ENCODE measurements at regions of chr2 and their contacts with region 1.

Region 1: DNA sequence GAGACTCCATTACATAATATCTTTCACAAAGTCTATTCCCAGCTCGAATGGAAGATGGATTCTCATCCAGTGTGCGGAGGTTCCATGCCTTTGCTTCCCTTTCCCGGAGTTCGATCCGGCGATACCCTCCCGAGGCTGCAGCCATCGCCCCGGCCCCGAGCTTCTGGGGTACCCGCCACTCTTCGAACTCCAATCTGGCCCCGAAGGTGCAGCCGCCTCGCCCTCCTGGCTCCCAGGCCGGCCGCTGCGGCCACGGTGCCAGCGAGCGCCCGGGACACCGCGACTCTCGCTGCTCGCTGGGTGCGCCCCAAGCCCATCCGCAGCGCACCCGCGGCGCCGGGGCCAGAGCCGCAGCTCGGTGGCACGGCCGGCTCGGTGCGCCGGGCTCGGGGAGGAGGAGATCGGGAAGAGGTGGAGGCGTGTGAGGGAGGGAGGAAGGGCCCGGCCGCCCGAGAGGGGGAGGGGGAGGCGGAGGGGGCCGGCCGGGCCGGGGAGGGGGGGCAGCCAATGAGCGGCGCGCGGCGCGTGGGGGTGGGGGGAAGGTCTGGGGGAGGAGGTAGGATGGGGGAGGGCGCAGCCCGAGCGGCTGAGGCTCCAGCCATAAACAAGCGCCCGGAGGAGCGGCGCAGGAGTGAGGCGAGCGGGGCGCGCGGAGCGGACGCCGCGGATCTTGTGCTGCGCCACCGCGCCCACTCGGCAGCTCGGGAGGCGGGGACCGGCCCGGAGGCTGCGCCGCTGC is at the start of gene CRIM1:
- DNase-seq: peak; percentile 90 to 95 (median 91)
- H3K4me3 ChIP-seq: peak within 1 kb of the TSS; percentile 68
- H3K27ac ChIP-seq: peak within 1 kb of the TSS; percentile 85 to 91
- H3K4me1 ChIP-seq: peaks cover 5% of the 10 kb centered on the region
- H3K27me3 ChIP-seq: no peaks in the 10 kb centered on the region
- CTCF ChIP-seq: no peak
- EP300 ChIP-seq: no peak
- POLR2A ChIP-seq: peak; percentile 80
- total RNA-seq, gene CRIM1: 58.6 to 134 (median 68.1) TPM

Region 2: DNA sequence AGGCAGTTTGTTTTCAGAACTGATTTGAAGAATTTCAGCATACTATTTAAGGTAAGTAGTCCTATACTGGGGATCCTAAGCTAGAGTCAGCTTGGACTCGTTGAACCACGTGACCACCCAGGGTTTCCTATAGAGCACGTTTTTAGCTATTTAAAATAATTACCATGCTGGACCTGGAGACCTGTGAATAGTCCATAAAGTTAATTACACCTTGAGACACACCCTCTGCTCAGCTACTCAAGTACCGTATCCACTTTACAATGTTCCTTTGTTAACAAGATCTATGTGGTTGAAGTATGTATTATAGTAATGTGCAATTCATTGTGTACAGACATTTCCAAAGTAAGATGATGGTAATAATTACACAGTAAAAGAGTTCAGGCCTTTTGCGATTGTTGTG is 67.9 kb after region 1 on chr2:
- intact Hi-C with region 1: loop called in 1 of 4 experiments (anchors 5 kb)
- DNase-seq: no peak
- H3K4me3 ChIP-seq: no peak overlapping the region
- H3K27ac ChIP-seq: no peak overlapping the region
- H3K4me1 ChIP-seq: peaks cover 7% of the 10 kb centered on the region
- H3K27me3 ChIP-seq: no peaks in the 10 kb centered on the region
- CTCF ChIP-seq: no peak
- EP300 ChIP-seq: no peak
- POLR2A ChIP-seq: no peak

Region 3: DNA sequence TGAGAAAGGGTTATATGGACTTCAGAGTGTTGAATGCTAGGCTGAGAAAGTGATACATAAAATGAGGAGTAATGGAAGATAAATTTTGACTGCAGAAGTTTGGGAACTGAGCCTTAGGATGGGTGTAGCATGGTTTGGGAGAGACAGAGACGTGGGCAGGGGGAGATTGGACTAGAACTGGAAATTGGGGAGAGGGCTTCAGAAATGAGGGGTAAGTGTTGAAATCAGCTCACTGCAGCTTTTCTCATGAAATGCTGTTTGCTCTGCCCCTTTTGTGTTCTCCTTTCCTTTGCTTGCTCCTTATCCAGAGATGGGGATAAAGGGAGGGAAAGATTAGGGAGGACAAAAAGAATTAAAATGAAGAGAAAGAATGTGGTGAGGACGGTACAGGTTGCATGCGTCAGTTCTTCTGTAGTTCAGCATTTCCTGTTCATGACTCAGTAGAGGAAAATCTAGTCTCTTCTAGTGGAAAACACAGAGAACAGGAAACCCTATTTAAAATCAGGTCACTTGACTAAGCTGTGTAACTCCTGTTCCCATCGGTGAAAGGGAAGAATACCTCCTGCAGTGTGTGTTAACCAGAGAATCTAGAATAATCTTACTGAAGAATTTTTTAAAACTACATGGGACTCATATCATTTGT is 105.8 kb after region 1 on chr2:
- intact Hi-C with region 1: loop called in 2 of 4 experiments (anchors 5 to 10 kb)
- DNase-seq: no peak
- H3K4me3 ChIP-seq: no peak overlapping the region
- H3K27ac ChIP-seq: no peak overlapping the region
- H3K4me1 ChIP-seq: peaks cover 12% of the 10 kb centered on the region
- H3K27me3 ChIP-seq: no peaks in the 10 kb centered on the region
- CTCF ChIP-seq: no peak
- EP300 ChIP-seq: no peak
- POLR2A ChIP-seq: no peak

Region 4: DNA sequence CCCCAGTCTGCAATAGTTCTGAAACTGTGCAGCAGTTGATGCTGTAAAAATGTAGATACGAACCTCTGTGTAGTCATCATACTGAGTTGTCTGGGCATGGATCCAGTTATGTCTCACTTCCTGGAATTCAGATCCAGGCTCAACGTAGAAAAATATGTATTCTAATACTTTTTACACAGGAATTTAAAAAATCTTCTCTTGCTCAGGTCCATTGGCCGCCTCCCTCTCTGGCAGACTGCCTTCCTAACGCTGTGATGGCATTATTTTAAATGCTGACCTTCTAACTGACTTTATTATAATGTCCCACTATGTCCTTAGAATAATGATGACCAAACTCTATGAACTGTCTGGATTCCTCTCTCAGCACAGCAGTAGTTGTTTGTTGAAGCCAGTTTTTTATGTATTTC is 123.0 kb after region 1 on chr2:
- intact Hi-C with region 1: no loop called
- DNase-seq: peak in 3 of 5 donors; percentile 32 to 48 (median 48)
- H3K4me3 ChIP-seq: no peak overlapping the region
- H3K27ac ChIP-seq: no peak overlapping the region
- H3K4me1 ChIP-seq: peaks cover 1% of the 10 kb centered on the region
- H3K27me3 ChIP-seq: no peaks in the 10 kb centered on the region
- CTCF ChIP-seq: no peak
- EP300 ChIP-seq: no peak
- POLR2A ChIP-seq: no peak

Region 5: DNA sequence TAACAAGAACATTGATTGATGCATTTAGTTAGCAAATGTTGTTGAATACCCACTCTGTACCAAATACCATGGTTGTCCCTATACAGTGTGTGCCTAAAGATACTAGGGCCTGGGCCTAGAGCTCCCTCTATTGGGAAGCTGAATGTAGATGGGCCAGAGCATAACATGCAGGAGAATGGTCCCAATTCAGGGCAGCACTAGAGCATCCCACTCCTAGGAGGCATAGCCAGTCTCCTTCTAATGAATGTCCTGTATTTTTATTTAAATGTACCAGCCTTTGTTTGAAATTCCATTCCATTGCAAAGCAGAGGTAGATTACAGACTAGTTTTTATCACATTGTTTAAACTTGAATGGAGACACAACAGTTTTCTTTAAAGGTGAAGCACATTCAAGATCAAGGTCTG is 152.1 kb after region 1 on chr2:
- intact Hi-C with region 1: loop called in 3 of 4 experiments (anchors 2 to 10 kb)
- DNase-seq: peak in 4 of 5 donors; percentile 25 to 57 (median 38)
- H3K4me3 ChIP-seq: no peak overlapping the region
- H3K27ac ChIP-seq: no peak overlapping the region
- H3K4me1 ChIP-seq: no peaks in the 10 kb centered on the region
- H3K27me3 ChIP-seq: no peaks in the 10 kb centered on the region
- CTCF ChIP-seq: peak in 2 of 3 donors; percentile 29 to 38
- EP300 ChIP-seq: no peak
- POLR2A ChIP-seq: no peak

Region 6: GRCh38 chr2:36597532-36598377 is 242.4 kb after region 1 on chr2 and contains the start of gene FEZ2:
- intact Hi-C with region 1: loop called in 1 of 4 experiments (anchors 5 kb)
- DNase-seq: peak; percentile 67 to 84 (median 78)
- H3K4me3 ChIP-seq: peak within 1 kb of the TSS; percentile 99
- H3K27ac ChIP-seq: peak within 1 kb of the TSS; percentile 56 to 91
- H3K4me1 ChIP-seq: peaks cover 14% of the 10 kb centered on the region
- H3K27me3 ChIP-seq: no peaks in the 10 kb centered on the region
- CTCF ChIP-seq: no peak
- EP300 ChIP-seq: no peak
- POLR2A ChIP-seq: no peak
- total RNA-seq, gene FEZ2: 34.3 to 49.4 (median 41.3) TPM

Region 7: GRCh38 chr2:36663851-36664695 is 308.8 kb after region 1 on chr2:
- intact Hi-C with region 1: loop called in 2 of 4 experiments (anchors 5 to 10 kb)
- DNase-seq: peak in 1 of 5 donors; percentile 28
- H3K4me3 ChIP-seq: no peak overlapping the region
- H3K27ac ChIP-seq: no peak overlapping the region
- H3K4me1 ChIP-seq: no peaks in the 10 kb centered on the region
- H3K27me3 ChIP-seq: no peaks in the 10 kb centered on the region
- CTCF ChIP-seq: peak in 2 of 3 donors; percentile 69 to 70
- EP300 ChIP-seq: no peak
- POLR2A ChIP-seq: no peak

Region 8: DNA sequence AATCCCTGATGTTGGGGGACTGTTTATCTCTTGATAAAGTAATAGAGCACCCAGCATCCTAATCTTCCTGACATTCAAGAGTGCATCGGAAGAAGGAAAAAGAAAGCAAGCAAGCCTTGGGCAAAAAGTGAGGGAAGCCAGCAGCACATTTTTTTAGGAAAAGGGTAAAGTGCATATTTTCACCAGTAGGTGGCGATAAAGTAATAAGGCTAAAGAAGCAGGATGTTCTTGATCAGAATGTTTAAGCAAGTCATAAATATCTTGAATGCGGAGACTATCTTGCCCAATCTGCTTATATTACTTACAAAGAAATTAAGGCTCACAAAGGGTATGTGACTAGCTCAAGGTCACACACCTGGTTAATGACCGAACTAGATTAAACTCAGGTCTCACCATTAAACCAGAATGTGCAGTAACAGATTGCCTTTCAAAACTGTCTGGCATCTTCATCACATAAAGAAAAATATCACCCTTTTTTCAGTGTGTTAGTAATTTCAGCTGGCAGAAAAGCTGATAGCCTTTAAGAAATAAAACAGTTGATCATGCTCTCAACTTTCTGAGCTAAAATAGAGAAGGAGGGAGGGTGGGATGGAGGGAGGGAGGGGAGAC is 425.0 kb after region 1 on chr2:
- intact Hi-C with region 1: loop called in 2 of 4 experiments (anchors 5 kb)
- DNase-seq: no peak
- H3K4me3 ChIP-seq: no peak overlapping the region
- H3K27ac ChIP-seq: no peak overlapping the region
- H3K4me1 ChIP-seq: peaks cover 2% of the 10 kb centered on the region
- H3K27me3 ChIP-seq: no peaks in the 10 kb centered on the region
- CTCF ChIP-seq: peak; percentile 63 to 75 (median 66)
- EP300 ChIP-seq: no peak
- POLR2A ChIP-seq: no peak